ENCODE measurements at regions of chr22 and their contacts with region 1.

Region 1: DNA sequence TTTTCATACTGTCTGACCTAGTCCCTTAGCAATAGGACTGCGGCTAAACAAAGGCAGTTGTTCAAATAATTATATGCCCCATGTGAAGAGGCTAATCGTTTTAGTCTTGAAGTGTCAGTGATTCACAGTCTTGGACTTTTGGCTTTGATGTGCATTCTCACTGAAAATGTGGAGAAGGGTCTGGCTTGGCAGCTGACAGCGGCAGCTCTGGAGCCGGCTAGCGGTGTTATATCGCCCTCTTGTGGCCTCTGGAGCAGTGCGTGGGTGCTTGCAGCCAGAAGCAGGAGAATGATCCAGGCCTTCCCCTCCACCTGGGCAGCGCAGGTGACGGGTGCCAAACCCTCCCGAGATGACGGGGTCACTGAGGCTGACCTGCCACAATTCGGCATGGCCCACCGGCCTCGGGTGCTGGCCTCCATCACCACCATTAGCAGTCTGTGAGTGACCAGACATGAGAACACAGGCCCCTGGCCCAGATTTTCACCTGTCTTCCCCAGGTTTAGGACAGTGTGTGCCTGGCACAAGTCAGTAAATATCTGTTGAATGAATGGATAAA is 90.3 kb upstream of the PITPNB start:
- DNase-seq: peak; percentile 83

Region 2: DNA sequence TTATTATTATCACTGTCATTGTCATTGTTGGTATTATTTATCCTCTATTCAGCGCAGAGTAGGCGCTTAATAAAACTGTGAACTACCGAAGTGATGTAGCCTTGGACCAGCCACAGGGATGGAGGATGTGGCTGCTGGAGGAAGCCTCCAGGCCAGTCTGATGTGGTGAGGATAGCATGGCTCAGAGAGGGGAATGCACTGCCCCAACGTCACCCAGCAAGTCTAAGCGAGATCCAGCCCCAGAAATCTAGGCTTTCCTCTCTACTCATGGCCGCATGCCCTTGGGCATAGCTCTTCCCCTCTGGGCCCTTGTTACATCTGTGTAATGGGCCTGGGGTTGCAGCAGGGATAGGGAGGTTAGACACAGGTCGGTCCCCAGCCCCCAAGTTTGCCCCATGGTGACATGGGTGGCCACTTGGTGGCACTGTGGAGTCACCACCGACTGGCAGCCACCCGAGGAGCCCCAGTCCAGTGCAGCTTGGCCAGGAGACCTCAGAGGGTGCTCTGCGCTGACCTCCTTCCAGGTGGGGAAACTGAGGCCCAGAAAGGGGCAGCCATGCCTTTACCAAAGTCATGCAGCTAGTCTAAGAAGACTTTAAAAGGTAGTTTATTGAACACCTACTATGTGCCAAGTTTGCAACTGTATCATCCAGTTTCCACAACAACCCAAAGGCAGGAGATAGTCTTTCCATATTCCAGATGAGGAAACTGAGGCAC is 603.5 kb before region 1 on chr22:
- intact Hi-C with region 1: loop called (anchors 10 kb)
- DNase-seq: no peak